ENCODE measurements at regions of chr1 and their contacts with region 1.

Region 1: GRCh38 chr1:175991706-175992105 is 215.4 kb downstream of the COP1 start:
- DNase-seq: no peak
- ATAC-seq: no peak
- H3K4me3 ChIP-seq: no peak overlapping the region
- H3K4me3 Mint-ChIP-seq: no peak overlapping the region
- H3K27ac ChIP-seq: no peak overlapping the region
- H3K27ac Mint-ChIP-seq: no peak overlapping the region
- H3K4me1 ChIP-seq: no peaks in the 10 kb centered on the region
- H3K4me1 Mint-ChIP-seq: peaks cover 0 to 14% (median 5%) of the 10 kb centered on the region in 7 donors
- H3K27me3 ChIP-seq: no peaks in the 10 kb centered on the region
- H3K27me3 Mint-ChIP-seq: no peaks in the 10 kb centered on the region

Region 2: DNA sequence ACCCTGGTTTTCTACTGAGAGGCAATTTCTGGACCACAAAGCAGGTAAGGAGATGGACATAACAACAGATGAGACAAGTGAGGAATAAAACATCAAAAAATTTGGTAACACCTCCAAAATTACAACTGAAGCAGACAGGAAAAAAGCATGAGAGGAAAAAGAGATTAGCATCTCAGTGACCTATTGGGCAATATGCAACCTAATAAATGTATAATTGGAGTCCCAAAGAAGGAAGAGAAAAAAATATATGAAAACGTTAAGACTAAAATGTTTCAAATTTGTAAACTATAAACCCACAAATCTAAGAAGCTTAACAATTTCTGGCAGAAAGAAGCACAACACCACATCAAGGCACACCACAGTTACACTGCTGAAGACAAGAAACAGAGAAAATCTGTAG is 40.1 kb before region 1 on chr1:
- CTCF ChIA-PET with region 1: no interaction called
- POLR2A ChIA-PET with region 1: no interaction called
- intact Hi-C with region 1: loop called in 1 of 2 experiments (anchors 1 kb)
- DNase-seq: no peak
- ATAC-seq: no peak
- H3K4me3 ChIP-seq: no peak overlapping the region
- H3K4me3 Mint-ChIP-seq: no peak overlapping the region
- H3K27ac ChIP-seq: no peak overlapping the region
- H3K27ac Mint-ChIP-seq: peak overlapping the region in 3 of 9 donors; percentile 19 to 36 (median 24)
- H3K4me1 ChIP-seq: no peaks in the 10 kb centered on the region
- H3K4me1 Mint-ChIP-seq: peaks cover 0 to 10% (median 0%) of the 10 kb centered on the region in 7 donors
- H3K27me3 ChIP-seq: no peaks in the 10 kb centered on the region
- H3K27me3 Mint-ChIP-seq: no peaks in the 10 kb centered on the region

Measured in naive thymus-derived CD4-positive, alpha-beta T cell (primary cell).